GM10248 (cell line): ENCODE measurements at regions of chr3 and their contacts with region 1.

Region 1: GRCh38 chr3:42746455-42747450 is 26.3 kb downstream of the CCDC13 start:
- DNase-seq: no peak
- CTCF ChIP-seq: no peak

Region 2: DNA sequence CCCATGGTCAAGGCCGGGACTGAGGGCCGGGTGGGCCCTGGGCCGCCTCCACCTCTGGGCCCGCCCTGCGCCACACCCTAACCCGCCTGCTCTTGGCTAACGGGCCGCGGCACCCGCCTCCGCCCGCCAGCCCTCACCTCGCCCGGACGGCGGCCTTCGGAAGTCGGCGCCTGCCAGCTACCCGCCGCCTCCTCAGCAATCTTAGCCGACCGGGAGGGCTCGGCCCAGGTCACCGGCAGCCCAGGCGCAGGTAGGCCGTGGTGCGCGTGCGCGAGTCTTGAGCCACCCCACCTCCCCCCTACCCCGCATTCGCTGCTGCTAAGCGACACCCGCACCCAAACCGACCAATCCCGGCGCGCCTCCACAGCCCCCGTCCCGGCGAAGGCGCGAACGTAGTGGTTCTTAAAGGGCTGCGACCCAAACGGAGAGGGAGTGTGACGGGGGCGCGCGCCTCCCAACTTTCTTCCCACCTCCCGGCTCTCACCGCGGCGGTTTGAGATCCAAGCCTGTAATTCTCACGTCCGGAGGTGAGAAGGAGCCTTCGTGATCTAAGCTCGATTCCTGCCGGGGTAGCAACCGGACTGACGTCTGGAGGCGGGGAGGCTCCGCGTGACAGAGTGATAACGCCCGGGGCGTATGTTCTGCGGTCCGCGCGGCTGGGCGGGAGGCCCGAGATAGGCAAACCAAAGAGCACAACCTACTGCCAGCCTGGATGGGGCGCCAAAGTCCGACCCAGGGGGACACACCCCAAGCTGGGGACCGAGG is 164.9 kb before region 1 on chr3 and contains the start of gene SEC22C:
- CTCF ChIA-PET with region 1: interaction called, 15 read pairs
- POLR2A ChIA-PET with region 1: no interaction called
- DNase-seq: peak; percentile 99
- CTCF ChIP-seq: peak; percentile 56

Region 3: DNA sequence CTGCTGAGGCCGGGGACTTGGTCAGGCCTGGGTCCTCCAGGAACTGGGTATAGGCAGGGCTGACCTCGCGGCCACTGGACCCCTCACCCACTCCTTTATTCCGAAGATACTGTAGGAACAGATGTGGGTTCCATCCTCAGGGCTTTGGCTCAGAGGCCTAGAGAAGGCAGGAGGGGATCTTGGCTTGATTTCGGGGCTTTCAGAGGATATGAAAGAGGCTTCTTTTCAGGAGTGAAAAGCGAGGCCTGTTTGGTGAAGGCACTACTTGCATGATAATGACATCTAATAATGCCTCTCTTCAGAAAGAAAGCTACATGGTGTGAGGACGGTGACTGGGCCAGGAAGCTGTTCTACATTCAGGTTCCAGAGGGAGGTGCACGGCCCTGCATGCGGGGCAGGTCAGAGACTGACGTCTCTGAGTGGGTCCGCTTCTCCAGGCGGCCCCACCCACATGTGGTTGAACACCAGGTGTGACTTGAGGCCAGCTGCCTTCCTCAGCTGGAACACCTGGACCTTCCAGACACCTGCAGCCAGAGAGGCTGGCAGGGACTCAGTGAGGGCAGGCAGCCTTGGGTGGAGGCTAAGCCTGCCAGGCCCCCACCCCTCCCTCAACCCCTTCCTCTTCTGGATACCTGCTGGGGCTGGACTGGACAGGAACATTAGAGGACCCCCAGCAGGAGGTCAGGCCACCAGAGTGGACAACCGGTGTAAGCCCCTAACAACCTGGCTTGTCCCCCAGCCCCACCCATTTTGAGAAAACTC is 13.1 kb before region 1 on chr3:
- CTCF ChIA-PET with region 1: interaction called, 23 read pairs
- POLR2A ChIA-PET with region 1: no interaction called
- DNase-seq: no peak
- CTCF ChIP-seq: no peak

Region 4: DNA sequence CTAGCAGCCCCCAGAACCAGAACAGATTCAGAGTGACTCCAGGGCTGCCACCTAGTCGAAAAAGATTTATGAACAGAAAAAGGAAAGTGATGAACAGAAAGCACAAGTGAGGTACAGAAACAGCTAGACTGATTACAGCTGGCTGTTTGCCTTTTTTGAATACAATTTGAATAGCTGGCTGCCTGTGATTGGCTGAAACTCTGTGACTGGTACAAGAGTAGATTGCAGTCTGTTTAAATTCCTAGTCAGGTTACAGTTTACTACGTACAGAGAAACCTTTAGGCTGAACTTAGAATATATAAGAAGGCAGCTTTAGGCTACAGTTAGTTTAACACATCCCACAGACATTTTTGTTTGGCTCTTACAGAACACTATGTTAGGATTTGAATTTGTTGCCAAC is 16.3 kb after region 1 on chr3:
- CTCF ChIA-PET with region 1: interaction called, 17 read pairs
- POLR2A ChIA-PET with region 1: interaction called, 4 read pairs
- DNase-seq: no peak
- CTCF ChIP-seq: no peak

Region 5: DNA sequence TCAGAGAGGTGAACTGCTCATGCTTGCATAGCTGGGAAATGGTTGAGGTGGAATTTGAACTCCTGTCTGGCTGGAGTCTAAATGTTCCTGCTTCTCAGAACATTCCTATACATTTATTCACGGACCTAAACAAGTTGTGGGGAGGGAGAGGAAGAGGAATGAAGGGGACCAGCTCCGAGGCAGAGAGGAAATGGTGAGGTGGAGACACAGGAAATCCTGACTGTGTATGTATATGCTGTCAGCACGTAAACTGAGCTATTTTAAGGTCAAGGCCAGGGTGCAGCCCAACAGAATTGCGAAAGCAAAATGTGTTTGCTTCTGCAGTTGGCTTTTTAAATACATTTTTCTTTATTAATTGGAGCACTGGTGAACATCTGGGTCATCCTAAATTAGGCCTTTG is 433.3 kb after region 1 on chr3:
- CTCF ChIA-PET with region 1: no interaction called
- POLR2A ChIA-PET with region 1: no interaction called
- DNase-seq: peak; percentile 37
- CTCF ChIP-seq: no peak